Mammary epithelial cell (primary cell): ENCODE measurements at regions of chr16 and their contacts with region 1.

Region 1: DNA sequence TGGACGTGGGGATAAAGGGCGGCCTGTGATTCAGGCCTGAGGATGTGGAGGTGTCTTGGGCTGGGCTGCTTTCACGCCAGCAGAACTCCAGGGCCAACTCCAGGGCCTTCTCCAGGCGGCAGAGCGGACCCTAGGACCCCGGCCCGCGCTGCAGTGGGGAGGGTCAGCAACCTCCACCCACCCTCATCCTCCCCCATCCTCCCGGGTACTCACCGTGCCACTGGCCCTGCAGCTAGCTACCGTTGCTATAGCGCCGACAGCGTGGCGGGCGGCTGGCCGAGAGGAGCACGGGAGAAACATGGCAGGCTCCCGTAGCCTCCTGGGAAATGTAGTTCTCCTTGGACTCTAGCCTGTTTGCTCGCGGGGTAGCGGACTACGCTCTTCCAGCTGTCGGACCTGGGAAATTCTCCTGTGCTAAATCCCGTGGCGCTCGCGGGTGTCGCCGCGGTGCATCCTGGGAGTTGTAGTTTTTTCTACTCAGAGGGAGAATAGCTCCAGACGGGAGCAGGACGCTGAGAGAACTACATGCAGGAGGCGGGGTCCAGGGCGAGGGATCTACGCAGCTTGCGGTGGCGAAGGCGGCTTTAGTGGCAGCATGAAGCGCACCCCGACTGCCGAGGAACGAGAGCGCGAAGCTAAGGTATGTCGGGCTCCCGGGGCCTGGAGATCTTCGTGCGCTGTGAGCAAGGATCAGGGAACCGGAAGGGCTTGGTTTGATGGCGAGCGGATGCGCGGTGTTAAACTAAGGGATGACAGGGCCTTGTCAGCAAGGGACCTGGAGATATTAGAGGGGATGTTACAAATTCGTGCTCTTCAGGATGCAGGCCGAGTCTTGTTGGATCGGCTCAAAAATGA is at the starts of genes FTO and RPGRIP1L:
- DNase-seq: peak; percentile 99
- H3K4me3 ChIP-seq: peak within 1 kb of the TSS; percentile 95 to 99 (median 98)
- H3K27ac ChIP-seq: peak within 1 kb of the TSS; percentile 84
- H3K4me1 ChIP-seq: peaks cover 13% of the 10 kb centered on the region
- H3K27me3 ChIP-seq: no peaks in the 10 kb centered on the region
- CTCF ChIP-seq: no peak
- total RNA-seq, gene FTO: 76.4 to 155 TPM
- total RNA-seq, gene RPGRIP1L: 9.9 to 11.2 TPM

Region 2: DNA sequence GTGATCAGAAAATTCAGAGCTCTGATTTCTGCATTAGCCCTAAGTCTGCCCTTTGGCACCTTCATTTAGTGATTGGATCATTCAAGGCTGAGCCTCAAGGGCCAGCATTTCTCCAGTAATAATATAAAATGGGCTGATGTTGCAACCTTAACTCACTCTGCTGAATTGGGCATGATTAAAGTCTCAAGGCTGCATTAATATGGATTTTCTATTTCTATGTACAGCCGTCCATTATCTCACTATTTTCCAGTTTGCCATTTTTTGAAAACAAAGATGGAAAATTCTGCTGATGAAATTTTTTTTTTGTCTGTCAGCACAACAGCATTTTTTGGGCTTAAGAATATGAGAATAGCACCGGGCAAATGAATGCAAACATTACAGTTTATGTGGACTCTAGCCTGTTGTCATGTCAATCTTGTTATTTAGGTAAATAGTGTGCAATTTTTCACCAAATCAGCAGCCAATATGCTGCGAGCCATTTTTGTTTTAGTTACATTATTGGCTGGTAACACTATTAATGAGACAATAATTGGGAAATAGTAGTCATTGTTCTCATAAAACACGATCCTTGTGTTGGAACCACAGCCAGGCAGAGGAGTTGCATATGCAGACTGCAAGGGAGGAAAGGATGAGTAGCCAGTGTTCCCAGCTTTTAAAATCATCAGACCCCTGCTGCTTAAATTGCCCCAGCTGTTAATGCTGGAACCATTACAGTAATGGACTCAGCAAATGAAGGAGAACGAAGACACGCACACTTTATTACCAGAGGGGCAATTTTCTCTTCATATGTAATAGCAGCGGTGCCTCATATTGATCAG is 10.6 kb after region 1 on chr16:
- CTCF ChIA-PET with region 1: no interaction called
- dilution Hi-C with region 1: no loop called
- in situ Hi-C with region 1: no loop called
- intact Hi-C with region 1: loop called (anchors 2 kb)
- DNase-seq: no peak
- H3K4me3 ChIP-seq: no peak overlapping the region
- H3K27ac ChIP-seq: no peak overlapping the region
- H3K4me1 ChIP-seq: peaks cover 4% of the 10 kb centered on the region
- H3K27me3 ChIP-seq: no peaks in the 10 kb centered on the region
- CTCF ChIP-seq: no peak